Psoas muscle (tissue), 8 donors: ENCODE measurements at regions of chr7 and their contacts with region 1.

Region 1: GRCh38 chr7:43700059-43700501 is 29.2 kb downstream of the COA1 start:
- DNase-seq: no peak
- ATAC-seq: peak in 3 of 4 donors; percentile 64 to 86 (median 71)
- H3K4me3 ChIP-seq: no peak overlapping the region
- H3K27ac ChIP-seq: no peak overlapping the region
- H3K4me1 ChIP-seq: peaks cover 22% of the 10 kb centered on the region
- H3K27me3 ChIP-seq: no peaks in the 10 kb centered on the region
- CTCF ChIP-seq: peak; percentile 73

Region 2: GRCh38 chr7:43647673-43648472 is 52.2 kb before region 1 on chr7:
- intact Hi-C with region 1: loop called (anchors 5 kb)
- DNase-seq: peak; percentile 73 to 85
- ATAC-seq: peak; percentile 85 to 91 (median 90)
- H3K4me3 ChIP-seq: no peak overlapping the region
- H3K27ac ChIP-seq: peak overlapping the region; percentile 91
- H3K4me1 ChIP-seq: peaks cover 57% of the 10 kb centered on the region
- H3K27me3 ChIP-seq: no peaks in the 10 kb centered on the region
- CTCF ChIP-seq: no peak